Activated CD4-positive, alpha-beta memory T cell treated with anti-CD3 and anti-CD28 coated beads for 36 hours (primary cell): ENCODE measurements at regions of chr14 and their contacts with region 1.

Region 1: DNA sequence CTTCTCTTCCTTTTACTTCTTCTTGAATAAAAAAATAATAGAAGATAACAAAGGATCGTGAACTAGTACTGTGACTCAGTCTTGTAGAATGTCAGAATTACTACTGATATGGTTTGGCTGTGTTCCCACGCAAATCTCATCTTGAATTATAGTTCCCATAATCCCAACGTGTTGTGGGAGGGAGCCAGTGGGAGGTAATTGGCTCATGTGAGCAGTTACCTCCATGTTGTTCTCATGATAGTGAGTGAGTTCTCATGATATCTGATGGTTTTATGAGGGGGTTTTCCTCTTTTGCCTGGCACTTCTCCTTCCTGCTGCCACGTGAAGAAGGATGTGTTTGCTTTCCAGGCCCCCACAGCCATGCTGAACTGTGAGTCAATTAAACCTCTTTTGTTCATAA is 549.5 kb downstream of the DIO2 start:
- DNase-seq: no peak
- H3K4me3 Mint-ChIP-seq: no peak overlapping the region
- H3K27ac Mint-ChIP-seq: no peak overlapping the region
- H3K4me1 Mint-ChIP-seq: no peaks in the 10 kb centered on the region
- H3K27me3 Mint-ChIP-seq: no peaks in the 10 kb centered on the region

Region 2: GRCh38 chr14:79605849-79606248 is 55.9 kb before region 1 on chr14:
- CTCF ChIA-PET with region 1: no interaction called
- POLR2A ChIA-PET with region 1: no interaction called
- intact Hi-C with region 1: no loop called
- DNase-seq: no peak
- H3K4me3 Mint-ChIP-seq: no peak overlapping the region
- H3K27ac Mint-ChIP-seq: no peak overlapping the region
- H3K4me1 Mint-ChIP-seq: no peaks in the 10 kb centered on the region
- H3K27me3 Mint-ChIP-seq: no peaks in the 10 kb centered on the region

Region 3: DNA sequence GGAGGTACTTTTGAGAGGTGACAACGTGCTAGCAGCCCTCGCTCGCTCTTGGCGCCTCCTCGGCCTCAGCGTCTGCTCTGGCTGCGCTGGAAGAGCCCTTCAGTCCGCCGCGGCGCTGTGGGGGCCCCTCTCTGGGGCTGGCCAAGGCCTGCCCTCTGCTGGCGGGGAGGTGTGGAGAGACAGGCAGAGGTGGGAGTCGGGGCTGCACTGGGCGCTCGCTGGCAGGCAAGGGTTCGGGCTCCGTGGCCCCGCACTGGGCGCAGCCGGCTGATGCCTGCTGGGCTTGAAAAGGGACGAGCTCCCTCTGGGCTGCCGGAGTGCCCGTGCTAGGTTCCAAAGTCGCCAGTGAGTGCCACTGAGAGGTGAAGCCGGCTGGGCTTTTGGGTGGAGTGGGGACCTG is 30.5 kb before region 1 on chr14:
- CTCF ChIA-PET with region 1: no interaction called
- POLR2A ChIA-PET with region 1: no interaction called
- intact Hi-C with region 1: loop called (anchors 1 kb)
- DNase-seq: no peak
- H3K4me3 Mint-ChIP-seq: no peak overlapping the region
- H3K27ac Mint-ChIP-seq: no peak overlapping the region
- H3K4me1 Mint-ChIP-seq: no peaks in the 10 kb centered on the region
- H3K27me3 Mint-ChIP-seq: no peaks in the 10 kb centered on the region